ENCODE measurements at regions of chr9 and their contacts with region 1.

Region 1: DNA sequence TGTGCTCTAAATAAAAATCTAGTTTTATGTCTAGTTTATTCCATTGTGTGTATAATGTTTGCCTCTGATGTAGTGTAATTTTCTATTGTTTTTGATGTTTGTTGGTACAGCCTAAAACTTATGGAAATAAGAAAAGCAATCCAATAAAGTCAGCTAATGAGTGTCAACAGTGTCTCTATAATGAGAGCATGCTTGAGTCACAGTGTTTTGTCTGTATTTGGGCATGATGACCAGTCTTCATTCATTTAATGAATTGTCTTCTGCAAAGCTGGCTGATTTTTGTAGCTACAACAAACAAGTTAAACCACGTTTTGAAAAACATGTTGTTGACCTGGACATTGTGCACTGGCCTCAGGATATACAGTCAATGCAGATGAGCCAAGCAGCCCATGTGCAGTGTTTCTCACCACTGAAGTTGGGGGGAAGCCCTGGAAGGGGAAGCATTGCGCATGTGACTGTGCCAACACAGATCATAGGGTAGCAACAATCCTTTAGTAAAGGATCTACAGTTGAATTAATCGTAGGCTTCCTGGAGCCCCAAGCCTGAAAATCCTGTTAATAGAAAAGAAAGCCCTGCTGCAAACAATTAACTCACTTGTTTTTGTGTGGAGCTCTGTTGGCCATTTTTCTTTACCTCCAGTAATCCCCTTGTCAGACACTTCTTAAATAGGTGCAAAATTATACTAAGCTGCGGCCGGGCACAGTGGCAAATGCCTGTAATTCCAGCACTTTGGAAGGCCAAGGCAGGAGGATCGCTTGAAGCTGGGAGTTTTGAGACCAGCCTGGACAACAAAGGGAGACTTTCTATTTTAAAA is 88.0 kb downstream of the INIP start:
- DNase-seq: no peak
- H3K4me3 ChIP-seq: no peak overlapping the region
- H3K27ac ChIP-seq: peak overlapping the region in 5 of 59 donors; percentile 1 to 18 (median 17)
- H3K27me3 ChIP-seq: no peaks in the 10 kb centered on the region
- CTCF ChIP-seq: no peak

Region 2: DNA sequence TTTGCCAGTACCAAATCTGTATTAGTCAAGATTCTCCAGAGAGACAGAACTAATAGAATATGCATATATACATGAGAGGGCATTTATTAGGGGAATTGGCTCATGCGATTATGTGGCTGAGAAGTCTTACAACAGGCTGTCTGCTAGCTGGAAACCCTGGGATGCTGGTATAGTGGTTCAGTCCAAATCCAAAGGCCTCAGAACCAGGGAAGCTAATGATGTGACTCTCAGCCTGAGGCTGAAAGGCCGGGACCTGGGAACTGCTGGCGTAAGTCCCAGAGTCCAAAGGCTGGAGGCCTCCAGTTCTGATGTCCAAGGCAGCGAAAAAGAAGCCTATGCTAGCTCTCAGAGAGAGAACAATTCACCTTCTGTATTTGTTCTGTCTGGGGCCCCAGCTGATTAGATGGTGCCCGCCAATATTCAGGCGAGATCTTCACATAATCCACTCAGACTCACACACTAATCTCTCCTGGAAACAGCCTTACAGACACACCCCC is 59.2 kb before region 1 on chr9:
- intact Hi-C with region 1: loop called in 1 of 2 experiments (anchors 10 kb)
- DNase-seq: peak; percentile 53 to 80 (median 70)
- H3K4me3 ChIP-seq: no peak overlapping the region
- H3K27ac ChIP-seq: peak overlapping the region in 44 of 59 donors; percentile 2 to 78 (median 45)
- H3K27me3 ChIP-seq: no peaks in the 10 kb centered on the region
- CTCF ChIP-seq: peak in 4 of 56 donors; percentile 5 to 26 (median 20)

Region 3: GRCh38 chr9:112717661-112718341 is 87.9 kb after region 1 on chr9 and contains the start of gene INIP:
- intact Hi-C with region 1: no loop called
- DNase-seq: peak; percentile 93 to 98 (median 96)
- H3K4me3 ChIP-seq: peak within 1 kb of the TSS; percentile 70 to 99 (median 92)
- H3K27ac ChIP-seq: peak within 1 kb of the TSS; percentile 66 to 98 (median 90)
- H3K27me3 ChIP-seq: no peaks in the 10 kb centered on the region
- CTCF ChIP-seq: peak in 25 of 56 donors; percentile 7 to 47 (median 24)
- total RNA-seq, gene INIP: 23.7 to 52.8 (median 39.3) TPM

Measured in dorsolateral prefrontal cortex (tissue), 120 donors.